Activated naive CD4-positive, alpha-beta T cell treated with anti-CD3 and anti-CD28 coated beads for 36 hours (primary cell): ENCODE measurements at regions of chr7 and their contacts with region 1.

Region 1: DNA sequence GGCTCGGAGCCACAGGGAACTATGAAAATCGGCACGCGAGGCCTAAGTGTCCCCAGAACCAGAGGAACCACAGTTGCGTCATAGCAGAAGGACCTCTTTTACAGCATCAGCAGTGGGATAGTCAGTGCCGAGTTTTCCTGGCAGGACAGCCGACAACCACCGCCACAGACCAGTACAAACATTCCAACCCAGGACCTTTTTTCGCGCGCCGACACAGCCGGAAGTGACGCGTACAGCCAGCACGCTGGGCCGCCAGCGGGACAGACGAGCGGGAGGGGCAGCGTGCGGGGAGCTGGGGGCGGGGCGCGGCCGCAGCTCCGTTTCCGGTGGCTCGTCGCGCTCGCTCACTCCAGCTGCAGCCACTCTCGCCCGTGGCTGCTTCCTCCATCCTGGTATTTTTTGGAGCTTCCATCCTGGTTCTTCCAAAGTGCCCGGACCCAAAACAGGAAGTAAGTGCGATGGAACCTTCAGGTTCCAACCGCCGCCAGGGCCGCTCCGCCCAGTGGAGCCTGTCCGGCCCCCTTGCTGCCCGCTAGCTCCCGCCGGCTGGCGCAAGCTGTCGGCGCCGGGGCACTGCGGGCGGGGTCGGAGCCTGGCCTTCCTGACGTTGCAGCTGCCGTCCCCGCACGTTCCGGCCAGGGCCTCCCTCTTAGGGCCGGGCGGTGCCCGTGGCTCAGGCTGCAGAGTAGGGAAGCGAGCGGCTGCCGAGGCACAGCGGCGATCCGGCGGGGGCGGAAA is at the start of gene DMTF1:
- DNase-seq: peak; percentile 91
- H3K4me3 Mint-ChIP-seq: peak within 1 kb of the TSS; percentile 84
- H3K27ac Mint-ChIP-seq: peak within 1 kb of the TSS; percentile 98
- H3K4me1 Mint-ChIP-seq: peaks cover 39% of the 10 kb centered on the region
- H3K27me3 Mint-ChIP-seq: no peaks in the 10 kb centered on the region
- total RNA-seq, gene DMTF1: 43.6 to 49.8 TPM

Region 2: DNA sequence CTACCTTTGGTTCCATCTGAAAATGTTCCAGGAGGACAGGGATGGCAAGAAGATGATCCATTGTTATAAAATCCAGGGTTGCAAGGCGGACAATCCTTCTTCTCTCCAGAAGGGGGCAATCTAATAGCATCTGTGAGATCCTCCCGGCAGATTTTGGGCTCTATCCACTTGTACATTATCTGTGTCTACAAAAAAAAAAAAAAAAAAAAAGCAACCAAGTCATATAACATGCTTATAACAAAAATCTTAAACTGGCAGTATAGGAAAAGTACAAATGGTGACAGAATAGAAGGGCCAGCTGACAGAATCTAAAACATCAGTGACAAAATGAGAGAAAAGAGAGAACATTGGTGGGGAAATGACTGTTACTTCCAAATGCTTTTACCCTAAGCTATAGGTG is 225.5 kb before region 1 on chr7:
- CTCF ChIA-PET with region 1: interaction called, 48 read pairs
- intact Hi-C with region 1: loop called (anchors 1 kb)
- DNase-seq: peak; percentile 43
- H3K4me3 Mint-ChIP-seq: no peak overlapping the region
- H3K27ac Mint-ChIP-seq: no peak overlapping the region
- H3K4me1 Mint-ChIP-seq: peaks cover 16% of the 10 kb centered on the region
- H3K27me3 Mint-ChIP-seq: peaks cover 2% of the 10 kb centered on the region

Region 3: DNA sequence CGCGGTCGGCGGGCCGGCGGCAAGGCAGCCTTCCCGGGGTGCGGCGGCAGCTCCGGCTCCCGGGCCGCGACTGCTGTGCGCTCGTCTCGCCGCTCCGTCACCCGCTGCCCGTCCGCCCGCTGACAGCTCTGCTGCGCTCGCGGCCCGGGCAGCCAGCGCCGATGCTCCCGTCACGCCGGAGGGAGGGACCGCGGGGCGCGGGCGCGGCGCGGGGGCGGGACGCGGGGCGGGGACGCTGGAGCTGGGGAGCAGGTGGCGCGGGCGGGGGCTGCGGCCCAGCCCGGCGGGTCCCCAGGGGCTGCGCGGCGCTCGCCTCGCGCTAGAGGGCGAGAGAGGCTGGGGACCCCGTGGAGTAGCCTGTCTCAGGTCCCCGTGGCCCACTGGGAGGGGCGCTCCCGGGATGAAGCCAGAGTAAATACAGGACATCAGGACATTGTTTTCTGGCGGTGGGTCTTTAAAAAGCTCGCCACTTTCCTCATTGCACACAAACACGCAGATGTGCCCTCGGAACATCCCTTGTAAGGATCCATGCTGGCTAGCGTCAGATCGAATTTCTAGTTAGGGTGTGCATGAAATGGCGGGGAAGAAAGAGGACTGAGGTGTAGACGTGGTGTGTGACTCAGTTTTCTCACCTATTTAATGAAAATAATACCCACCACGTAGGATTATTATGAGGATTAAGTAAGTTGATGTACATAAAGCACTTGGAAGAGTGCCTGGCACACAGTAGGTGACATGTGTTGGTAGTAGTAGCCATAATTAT is 92.6 kb before region 1 on chr7 and contains the start of gene ELAPOR2:
- CTCF ChIA-PET with region 1: interaction called, 6 read pairs
- intact Hi-C with region 1: loop called (anchors 1 kb)
- DNase-seq: peak; percentile 79
- H3K4me3 Mint-ChIP-seq: peak within 1 kb of the TSS; percentile 71
- H3K27ac Mint-ChIP-seq: no peak within 1 kb of the TSS
- H3K4me1 Mint-ChIP-seq: peaks cover 12% of the 10 kb centered on the region
- H3K27me3 Mint-ChIP-seq: peaks cover 5% of the 10 kb centered on the region
- total RNA-seq, gene ELAPOR2: 3.2 to 3.9 TPM

Region 4: DNA sequence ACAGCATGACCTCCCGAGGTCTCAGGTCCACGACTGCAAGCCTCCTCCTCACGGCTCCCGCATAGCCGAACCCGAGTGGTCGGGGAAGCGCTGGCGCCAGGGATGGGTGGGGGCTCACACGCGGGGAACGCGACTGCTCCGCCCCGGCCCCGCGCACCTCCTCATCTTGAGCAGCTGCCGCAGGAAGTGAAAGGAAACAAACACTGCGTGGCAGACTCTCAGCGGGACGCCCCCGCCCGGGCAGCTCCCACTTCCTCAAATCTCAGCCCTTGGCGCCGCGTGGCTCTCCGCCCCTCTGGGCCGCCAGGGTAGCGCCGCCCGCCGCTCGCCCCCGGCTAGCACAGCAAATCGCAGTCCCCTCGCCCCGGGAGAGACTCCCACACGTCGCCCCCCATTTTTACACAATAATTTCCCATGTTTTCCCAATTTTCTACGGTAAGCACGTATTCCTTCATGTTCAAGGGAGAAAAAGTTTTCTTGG is 67.3 kb after region 1 on chr7 and contains the start of gene TMEM243:
- CTCF ChIA-PET with region 1: interaction called, 6 read pairs
- intact Hi-C with region 1: loop called (anchors 1 kb)
- DNase-seq: peak; percentile 88
- H3K4me3 Mint-ChIP-seq: peak within 1 kb of the TSS; percentile 98
- H3K27ac Mint-ChIP-seq: peak within 1 kb of the TSS; percentile 97
- H3K4me1 Mint-ChIP-seq: peaks cover 28% of the 10 kb centered on the region
- H3K27me3 Mint-ChIP-seq: peaks cover 6% of the 10 kb centered on the region
- total RNA-seq, gene TMEM243: 50.4 to 53.1 TPM

Region 5: DNA sequence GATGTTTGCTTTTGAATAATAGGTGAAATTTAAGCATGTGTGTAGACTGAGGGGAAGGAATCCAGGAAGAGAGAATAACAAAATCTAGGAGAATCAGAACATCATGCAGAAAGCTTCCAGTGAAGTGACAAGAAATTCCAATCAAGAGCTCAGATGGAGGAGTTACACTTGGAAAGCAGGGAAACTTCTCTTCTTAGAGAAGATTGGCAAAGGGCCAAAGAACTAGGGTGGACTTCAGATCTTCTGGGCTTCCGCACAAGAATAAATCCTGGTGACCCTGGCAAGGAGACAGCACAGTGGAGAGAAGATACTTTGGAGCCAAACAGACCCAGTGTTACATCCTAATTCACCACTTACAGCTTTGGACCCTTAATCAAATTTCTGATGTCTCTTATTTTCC is 99.9 kb after region 1 on chr7:
- CTCF ChIA-PET with region 1: no interaction called
- intact Hi-C with region 1: no loop called
- DNase-seq: no peak
- H3K4me3 Mint-ChIP-seq: no peak overlapping the region
- H3K27ac Mint-ChIP-seq: no peak overlapping the region
- H3K4me1 Mint-ChIP-seq: no peaks in the 10 kb centered on the region
- H3K27me3 Mint-ChIP-seq: peaks cover 17% of the 10 kb centered on the region

Region 6: DNA sequence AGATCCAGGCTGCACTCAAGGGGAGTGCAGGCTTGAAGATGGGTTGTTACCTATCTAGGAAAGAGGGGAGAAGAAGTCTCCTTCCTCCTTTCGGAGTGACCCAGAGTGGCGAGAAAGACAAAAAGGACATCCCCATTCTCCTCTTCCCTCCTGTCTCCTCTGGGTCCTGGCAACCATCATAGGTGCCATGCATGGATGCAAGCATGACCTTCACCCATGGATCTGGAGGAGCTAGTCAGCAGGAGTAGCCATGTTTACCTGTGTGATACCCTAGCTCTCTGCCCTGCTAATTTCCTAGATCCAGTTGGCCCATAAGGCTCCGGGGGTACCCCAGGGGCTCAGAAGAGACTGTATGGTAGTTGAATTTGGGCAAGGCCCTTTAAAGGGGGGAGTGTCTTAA is 176.0 kb after region 1 on chr7:
- CTCF ChIA-PET with region 1: no interaction called
- intact Hi-C with region 1: no loop called
- DNase-seq: peak; percentile 16
- H3K4me3 Mint-ChIP-seq: no peak overlapping the region
- H3K27ac Mint-ChIP-seq: no peak overlapping the region
- H3K4me1 Mint-ChIP-seq: peaks cover 2% of the 10 kb centered on the region
- H3K27me3 Mint-ChIP-seq: no peaks in the 10 kb centered on the region

Region 7: GRCh38 chr7:87426160-87426559 is 273.9 kb after region 1 on chr7:
- CTCF ChIA-PET with region 1: no interaction called
- intact Hi-C with region 1: no loop called
- DNase-seq: no peak
- H3K4me3 Mint-ChIP-seq: no peak overlapping the region
- H3K27ac Mint-ChIP-seq: no peak overlapping the region
- H3K4me1 Mint-ChIP-seq: no peaks in the 10 kb centered on the region
- H3K27me3 Mint-ChIP-seq: peaks cover 4% of the 10 kb centered on the region

Region 8: DNA sequence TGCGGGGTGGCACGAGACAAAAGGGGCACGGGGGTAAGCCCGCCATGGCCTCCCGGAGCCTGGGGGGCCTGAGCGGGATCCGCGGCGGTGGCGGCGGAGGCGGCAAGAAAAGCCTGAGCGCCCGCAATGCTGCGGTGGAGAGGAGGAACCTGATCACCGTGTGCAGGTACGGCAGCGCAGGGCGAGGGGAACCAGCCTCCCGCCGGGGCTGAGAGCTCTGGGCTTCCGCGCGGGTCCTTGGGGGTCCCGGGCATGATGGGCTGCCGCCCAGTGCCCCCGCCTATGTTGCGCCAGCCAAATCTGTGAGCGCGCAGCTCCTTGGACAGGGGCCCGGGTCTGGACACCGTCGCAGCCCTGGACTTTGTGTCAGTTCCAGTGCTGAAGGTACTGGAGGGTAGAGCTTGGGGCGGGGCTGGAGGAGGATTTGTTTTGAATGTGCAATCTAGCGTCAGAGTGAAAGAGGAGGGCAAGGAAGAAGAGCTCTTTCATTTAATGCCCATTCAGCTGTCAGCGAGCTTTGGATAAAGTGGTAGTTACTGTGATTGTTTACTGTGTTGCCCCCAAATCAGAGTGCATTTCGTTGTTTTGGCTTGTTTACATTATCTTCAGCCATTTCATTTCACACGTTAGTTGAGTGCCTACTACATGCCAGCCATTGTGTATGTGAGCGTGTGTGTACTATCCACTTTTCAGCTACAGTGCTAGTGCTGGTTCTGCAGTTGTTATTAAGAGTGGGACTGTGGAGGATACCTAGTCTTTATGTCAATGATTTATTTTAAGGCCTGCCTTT is 476.7 kb after region 1 on chr7:
- CTCF ChIA-PET with region 1: no interaction called
- intact Hi-C with region 1: loop called (anchors 5 kb)
- DNase-seq: peak; percentile 33
- H3K4me3 Mint-ChIP-seq: peak overlapping the region; percentile 75
- H3K27ac Mint-ChIP-seq: no peak overlapping the region
- H3K4me1 Mint-ChIP-seq: peaks cover 7% of the 10 kb centered on the region
- H3K27me3 Mint-ChIP-seq: peaks cover 6% of the 10 kb centered on the region